Tibial artery (tissue), 4 donors: ENCODE measurements at regions of chr9 and their contacts with region 1.

Region 1: DNA sequence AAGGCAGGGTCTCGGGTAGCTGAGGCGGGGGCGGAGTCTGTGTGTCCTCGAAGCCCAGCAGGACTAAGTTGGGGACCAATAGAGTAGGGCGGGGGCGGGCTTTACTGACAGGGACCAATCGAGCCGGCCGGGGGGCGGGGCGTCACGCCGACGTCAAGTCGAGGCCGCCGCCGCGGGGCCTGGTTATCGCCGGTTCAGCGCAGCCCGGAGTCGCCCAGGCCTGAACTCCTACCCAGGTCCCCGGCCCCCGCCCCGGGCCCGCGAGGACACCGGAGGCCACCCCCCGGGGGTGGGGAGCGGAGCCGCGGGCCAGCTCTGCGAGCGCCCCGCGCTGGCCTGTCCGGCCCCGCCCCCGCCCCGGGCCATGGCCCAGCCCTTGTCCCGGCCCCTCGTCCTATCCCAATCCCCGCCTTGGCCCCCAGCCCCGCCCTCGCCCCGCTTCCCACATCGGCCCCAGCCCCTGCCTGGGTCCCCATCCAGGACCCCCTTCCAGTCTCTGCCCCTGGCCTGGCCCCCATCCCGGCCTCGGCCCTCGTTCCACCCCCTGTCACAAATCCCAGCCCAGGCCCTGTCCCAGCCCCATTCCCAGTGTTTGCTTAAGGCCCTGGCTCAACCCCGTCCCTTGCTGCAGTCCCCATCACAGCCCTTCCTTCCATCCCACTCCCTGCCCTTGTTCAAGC is at the start of gene TMEM8B:
- DNase-seq: peak; percentile 98 to 100
- H3K4me3 ChIP-seq: peak within 1 kb of the TSS; percentile 79 to 97
- H3K27ac ChIP-seq: peak within 1 kb of the TSS; percentile 96 to 99
- H3K4me1 ChIP-seq: peaks cover 0 to 63% (median 45%) of the 10 kb centered on the region in 4 donors
- H3K27me3 ChIP-seq: no peaks in the 10 kb centered on the region
- CTCF ChIP-seq: no peak

Region 2: GRCh38 chr9:35790385-35791296 is 38.6 kb before region 1 on chr9:
- intact Hi-C with region 1: loop called (anchors 5 kb)
- DNase-seq: peak; percentile 82 to 89
- H3K4me3 ChIP-seq: peak overlapping the region; percentile 60 to 61
- H3K27ac ChIP-seq: peak overlapping the region; percentile 82 to 87
- H3K4me1 ChIP-seq: peaks cover 0 to 46% (median 36%) of the 10 kb centered on the region in 4 donors
- H3K27me3 ChIP-seq: no peaks in the 10 kb centered on the region
- CTCF ChIP-seq: peak; percentile 82 to 93

Region 3: DNA sequence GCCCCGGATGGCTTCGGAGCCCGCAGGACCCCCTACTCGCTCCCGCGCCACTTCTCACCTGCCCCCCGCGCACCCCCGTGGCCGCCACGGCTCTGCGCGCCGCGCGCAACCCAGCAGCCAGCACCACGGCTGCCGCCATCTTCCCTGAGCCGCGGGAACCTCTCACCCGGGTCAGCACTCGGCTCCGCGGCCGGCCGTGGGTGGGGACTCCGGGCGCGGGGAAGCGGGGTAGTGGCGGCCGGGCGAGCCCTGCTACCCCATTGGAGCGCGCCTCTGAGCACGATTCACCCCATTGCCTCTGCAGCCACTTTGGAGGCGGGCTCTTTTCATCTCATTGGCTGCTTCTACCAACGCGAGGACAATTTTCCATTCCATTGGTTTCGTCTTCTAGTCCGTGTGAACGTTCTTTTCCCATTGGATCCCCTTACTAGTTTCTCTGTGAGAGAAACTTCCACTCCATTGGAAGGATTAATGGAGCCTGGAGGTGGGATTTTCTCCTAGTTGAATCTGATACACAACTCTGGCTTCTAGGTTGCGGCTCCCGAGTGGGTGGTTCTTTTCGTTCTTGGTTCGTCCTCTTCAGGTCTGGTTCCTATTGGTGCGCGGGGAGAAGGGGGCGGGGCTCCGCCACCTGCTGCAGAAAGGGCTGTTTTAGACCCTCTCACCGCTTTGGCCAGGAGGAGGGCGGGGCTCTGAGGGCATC is 14.2 kb before region 1 on chr9 and contains the start of gene HINT2:
- intact Hi-C with region 1: loop called (anchors 2 kb)
- DNase-seq: peak; percentile 98 to 99
- H3K4me3 ChIP-seq: peak within 1 kb of the TSS; percentile 72 to 90
- H3K27ac ChIP-seq: peak within 1 kb of the TSS; percentile 90 to 97
- H3K4me1 ChIP-seq: peaks cover 0 to 38% (median 30%) of the 10 kb centered on the region in 4 donors
- H3K27me3 ChIP-seq: no peaks in the 10 kb centered on the region
- CTCF ChIP-seq: no peak

Region 4: DNA sequence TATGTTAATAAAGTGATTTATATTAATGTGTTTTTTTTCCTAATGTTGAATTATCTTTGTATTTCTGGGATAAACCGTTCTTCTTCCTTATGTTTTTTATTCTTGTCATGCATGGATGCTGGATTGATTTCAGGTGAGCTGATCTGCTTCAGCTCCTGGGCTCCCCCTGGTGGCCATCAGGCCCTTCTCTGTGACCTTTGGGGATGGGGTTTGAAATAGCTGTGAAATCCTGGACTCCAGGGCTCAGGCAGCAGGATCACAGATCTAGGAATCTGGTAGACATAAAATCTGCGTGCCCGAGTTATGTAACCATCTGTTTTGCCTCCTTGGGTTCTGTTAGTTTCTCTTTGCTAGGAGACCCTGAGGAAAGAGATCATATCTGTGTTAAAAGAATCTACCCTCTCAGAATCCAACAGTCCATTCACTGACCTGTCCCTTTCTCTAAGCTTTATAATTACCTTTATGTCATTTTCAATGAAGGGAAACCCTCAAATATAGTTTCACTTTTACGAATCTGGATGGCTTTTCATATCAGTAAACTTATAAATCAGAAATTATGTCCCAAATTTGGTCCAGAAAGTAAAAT is 53.1 kb after region 1 on chr9:
- intact Hi-C with region 1: loop called (anchors 2 kb)
- DNase-seq: peak; percentile 87 to 89
- H3K4me3 ChIP-seq: no peak overlapping the region
- H3K27ac ChIP-seq: no peak overlapping the region
- H3K4me1 ChIP-seq: no peaks in the 10 kb centered on the region
- H3K27me3 ChIP-seq: no peaks in the 10 kb centered on the region
- CTCF ChIP-seq: peak; percentile 90 to 92